ENCODE measurements at regions of chr5 and their contacts with region 1.

Region 1: DNA sequence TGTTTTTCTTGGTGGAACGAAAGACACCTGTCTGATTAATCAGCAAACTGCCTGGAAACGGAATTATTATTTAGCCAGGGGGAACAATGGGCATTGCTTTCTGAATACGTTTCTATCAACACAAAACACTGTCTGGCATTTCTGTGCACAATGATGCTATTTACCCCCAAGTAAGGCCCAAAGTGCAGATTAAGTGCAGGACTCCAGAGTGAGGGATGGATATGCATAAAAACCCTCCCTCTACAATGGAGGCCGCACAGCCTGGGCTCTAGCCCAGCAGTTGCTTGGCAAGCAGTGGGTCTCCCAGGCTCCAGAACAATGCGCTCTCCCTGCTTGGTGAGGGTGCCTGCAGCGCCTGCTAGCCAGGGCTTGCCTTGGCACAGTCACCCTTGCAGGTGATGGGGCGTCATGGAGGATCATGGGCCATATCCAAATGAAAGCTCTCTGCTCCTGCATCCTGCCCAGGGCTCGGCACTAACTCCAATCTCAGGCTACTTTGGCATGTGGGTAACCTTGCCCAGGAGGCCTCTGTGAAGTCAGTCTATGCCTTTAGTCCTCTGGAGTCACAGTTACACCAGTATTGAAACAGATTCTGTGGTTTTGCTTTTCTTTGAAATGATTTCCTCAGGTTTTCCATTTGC is 11.5 kb upstream of the SPATA24 start:
- DNase-seq: peak; percentile 75
- H3K4me3 ChIP-seq: no peak overlapping the region
- H3K27ac ChIP-seq: peak overlapping the region; percentile 52
- H3K4me1 ChIP-seq: peaks cover 18% of the 10 kb centered on the region
- H3K27me3 ChIP-seq: no peaks in the 10 kb centered on the region
- CTCF ChIP-seq: no peak

Region 2: DNA sequence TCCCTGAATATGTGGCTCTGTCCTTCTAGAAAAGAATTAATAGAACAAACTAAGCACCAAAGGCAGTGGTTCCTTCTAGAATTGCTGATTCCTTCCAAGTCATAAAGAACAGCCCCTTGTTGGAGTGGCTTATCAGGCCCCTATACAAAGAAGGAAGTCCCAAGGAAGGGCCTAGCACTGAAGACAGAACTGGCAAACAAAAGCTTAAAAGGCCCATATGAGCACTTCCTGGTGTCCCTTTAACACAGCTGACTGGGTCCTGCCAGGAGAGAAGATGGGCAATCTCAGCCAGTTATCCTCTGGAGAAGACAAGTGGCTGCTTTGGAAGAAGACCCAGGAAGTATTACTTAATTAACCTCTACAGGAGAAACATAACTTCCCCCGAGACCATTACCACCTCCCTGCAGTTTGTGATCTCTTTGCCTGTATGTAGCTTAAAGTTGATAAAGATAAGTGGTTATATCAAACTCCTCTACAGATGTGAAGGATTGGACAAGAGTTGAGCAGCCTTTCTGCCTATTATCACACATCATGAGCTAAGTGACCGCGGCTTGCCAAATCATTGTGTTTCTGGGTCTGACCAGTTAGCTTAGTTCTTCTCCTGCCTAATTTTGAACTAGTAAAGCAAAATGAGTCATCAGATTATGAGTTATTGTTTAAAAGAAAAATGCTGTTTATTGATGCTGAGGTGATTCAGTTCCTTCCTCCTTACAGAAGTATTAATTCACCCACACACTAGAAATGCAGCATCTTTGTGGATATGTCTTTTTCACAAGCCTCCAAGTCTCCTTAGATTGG is 80.5 kb after region 1 on chr5:
- CTCF ChIA-PET with region 1: no interaction called
- dilution Hi-C with region 1: loop called (anchors 5 kb)
- in situ Hi-C with region 1: no loop called
- intact Hi-C with region 1: no loop called
- DNase-seq: peak; percentile 75
- H3K4me3 ChIP-seq: no peak overlapping the region
- H3K27ac ChIP-seq: no peak overlapping the region
- H3K4me1 ChIP-seq: peaks cover 19% of the 10 kb centered on the region
- H3K27me3 ChIP-seq: no peaks in the 10 kb centered on the region
- CTCF ChIP-seq: no peak